CD8-positive, alpha-beta T cell (primary cell): ENCODE measurements at regions of chr11 and their contacts with region 1.

Region 1: GRCh38 chr11:62169091-62169847 is 20.7 kb upstream of the SCGB1D1 start:
- DNase-seq: no peak
- ATAC-seq: no peak
- H3K4me3 ChIP-seq: no peak overlapping the region
- H3K4me3 Mint-ChIP-seq: no peak overlapping the region
- H3K27ac ChIP-seq: no peak overlapping the region
- H3K27ac Mint-ChIP-seq: no peak overlapping the region
- H3K4me1 ChIP-seq: no peaks in the 10 kb centered on the region
- H3K4me1 Mint-ChIP-seq: peaks cover 5% of the 10 kb centered on the region
- H3K27me3 ChIP-seq: peaks cover 0 to 6% of the 10 kb centered on the region in 2 experiments
- H3K27me3 Mint-ChIP-seq: peaks cover 42% of the 10 kb centered on the region
- CTCF ChIP-seq: no peak

Region 2: GRCh38 chr11:62309991-62310390 is 140.7 kb after region 1 on chr11:
- CTCF ChIA-PET with region 1: interaction called, 21 read pairs
- POLR2A ChIA-PET with region 1: no interaction called
- intact Hi-C with region 1: loop called (anchors 1 kb)
- DNase-seq: peak in 1 of 9 experiments; percentile 26
- ATAC-seq: no peak
- H3K4me3 ChIP-seq: no peak overlapping the region
- H3K4me3 Mint-ChIP-seq: no peak overlapping the region
- H3K27ac ChIP-seq: no peak overlapping the region
- H3K27ac Mint-ChIP-seq: no peak overlapping the region
- H3K4me1 ChIP-seq: peaks cover 6% of the 10 kb centered on the region
- H3K4me1 Mint-ChIP-seq: peaks cover 13% of the 10 kb centered on the region
- H3K27me3 ChIP-seq: no peaks in the 10 kb centered on the region
- H3K27me3 Mint-ChIP-seq: peaks cover 26% of the 10 kb centered on the region
- CTCF ChIP-seq: no peak

Region 3: GRCh38 chr11:62315431-62315830 is 146.2 kb after region 1 on chr11:
- CTCF ChIA-PET with region 1: interaction called, 21 read pairs
- POLR2A ChIA-PET with region 1: no interaction called
- intact Hi-C with region 1: loop called (anchors 1 kb)
- DNase-seq: no peak
- ATAC-seq: no peak
- H3K4me3 ChIP-seq: no peak overlapping the region
- H3K4me3 Mint-ChIP-seq: no peak overlapping the region
- H3K27ac ChIP-seq: no peak overlapping the region
- H3K27ac Mint-ChIP-seq: no peak overlapping the region
- H3K4me1 ChIP-seq: peaks cover 6% of the 10 kb centered on the region
- H3K4me1 Mint-ChIP-seq: peaks cover 13% of the 10 kb centered on the region
- H3K27me3 ChIP-seq: no peaks in the 10 kb centered on the region
- H3K27me3 Mint-ChIP-seq: peaks cover 24% of the 10 kb centered on the region
- CTCF ChIP-seq: no peak

Region 4: DNA sequence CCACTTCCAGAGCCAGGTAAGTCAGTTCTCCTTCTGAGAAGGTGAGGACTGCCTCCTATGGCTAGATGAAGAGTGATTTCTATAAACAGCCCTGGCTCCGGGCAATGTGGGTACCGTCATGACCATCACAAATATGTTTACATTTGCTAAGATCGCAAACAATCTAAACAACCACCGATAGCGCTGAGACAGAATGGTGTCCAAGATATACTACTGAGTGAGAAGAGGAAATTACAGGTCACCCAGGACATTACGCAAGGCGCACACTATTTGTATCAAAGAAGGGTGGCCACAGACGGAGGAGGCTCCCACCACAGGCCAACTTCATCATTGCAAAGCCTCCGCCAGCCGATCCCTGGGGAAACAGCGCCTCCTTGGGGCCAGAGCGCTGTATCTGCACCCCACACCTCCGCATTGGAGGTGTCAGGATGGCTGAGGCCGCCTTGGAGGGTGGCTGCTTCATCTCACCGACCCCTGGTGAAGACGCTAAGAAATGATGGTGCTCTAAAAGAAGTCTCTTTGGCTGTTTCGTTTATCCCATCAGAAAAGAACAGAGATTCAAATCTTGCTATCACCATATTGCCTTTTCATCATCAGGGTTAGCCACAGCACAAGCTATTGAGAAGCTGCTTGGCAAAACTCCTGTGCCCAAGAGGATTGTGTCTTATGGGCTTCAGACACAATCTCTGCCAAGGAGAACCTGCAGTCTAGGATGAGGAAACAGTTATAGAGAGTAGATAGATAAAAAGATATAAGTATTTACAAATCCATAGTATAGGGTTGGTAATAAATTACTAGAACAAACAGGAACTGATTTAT is 155.7 kb after region 1 on chr11:
- CTCF ChIA-PET with region 1: no interaction called
- POLR2A ChIA-PET with region 1: no interaction called
- intact Hi-C with region 1: loop called (anchors 1 kb)
- DNase-seq: peak in 7 of 9 experiments; percentile 37 to 71 (median 54)
- ATAC-seq: peak; percentile 94
- H3K4me3 ChIP-seq: no peak overlapping the region
- H3K4me3 Mint-ChIP-seq: no peak overlapping the region
- H3K27ac ChIP-seq: no peak overlapping the region
- H3K27ac Mint-ChIP-seq: no peak overlapping the region
- H3K4me1 ChIP-seq: no peaks in the 10 kb centered on the region
- H3K4me1 Mint-ChIP-seq: no peaks in the 10 kb centered on the region
- H3K27me3 ChIP-seq: no peaks in the 10 kb centered on the region
- H3K27me3 Mint-ChIP-seq: peaks cover 13% of the 10 kb centered on the region
- CTCF ChIP-seq: peak; percentile 65

Region 5: DNA sequence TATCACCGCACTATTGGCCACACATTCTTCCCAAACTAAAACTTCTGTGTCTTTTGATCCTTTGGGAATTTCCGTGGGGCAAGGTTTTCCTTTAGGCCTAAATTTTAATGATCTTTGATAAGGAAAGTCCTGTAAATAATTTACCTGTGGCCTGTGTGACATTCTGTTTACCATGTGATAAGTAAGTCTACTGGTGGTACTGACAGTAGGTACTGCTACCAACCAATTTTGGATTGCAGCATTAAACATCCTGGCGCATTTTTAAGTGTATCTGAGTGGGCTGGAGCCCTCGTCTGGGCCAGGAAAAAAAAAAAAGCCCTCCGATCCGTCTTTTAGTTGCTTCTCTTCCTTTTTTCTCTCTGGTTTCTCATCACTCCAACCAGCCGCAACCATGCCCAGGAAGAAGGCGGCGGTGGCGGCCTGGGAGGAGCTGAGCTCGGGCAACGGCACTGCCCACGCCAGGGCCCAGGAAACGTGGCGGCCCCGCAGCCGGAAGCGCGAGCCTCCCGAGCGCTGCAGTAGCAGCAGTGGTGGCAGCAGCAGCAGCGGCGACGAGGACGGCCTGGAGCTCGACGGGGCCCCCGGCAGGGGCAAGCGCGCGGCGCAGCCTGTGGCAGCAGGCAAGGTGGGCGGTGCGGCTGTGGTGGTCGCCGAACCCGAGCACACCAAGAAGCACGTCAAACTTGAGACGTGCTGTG is 201.6 kb after region 1 on chr11:
- CTCF ChIA-PET with region 1: no interaction called
- POLR2A ChIA-PET with region 1: no interaction called
- intact Hi-C with region 1: loop called in 1 of 2 experiments (anchors 5 kb)
- DNase-seq: peak; percentile 12 to 76 (median 38)
- ATAC-seq: peak; percentile 87
- H3K4me3 ChIP-seq: no peak overlapping the region
- H3K4me3 Mint-ChIP-seq: peak overlapping the region; percentile 68
- H3K27ac ChIP-seq: peak overlapping the region in 1 of 2 experiments; percentile 69
- H3K27ac Mint-ChIP-seq: peak overlapping the region; percentile 86
- H3K4me1 ChIP-seq: no peaks in the 10 kb centered on the region
- H3K4me1 Mint-ChIP-seq: peaks cover 16% of the 10 kb centered on the region
- H3K27me3 ChIP-seq: no peaks in the 10 kb centered on the region
- H3K27me3 Mint-ChIP-seq: no peaks in the 10 kb centered on the region
- CTCF ChIP-seq: no peak